ENCODE measurements at regions of chr14 and their contacts with region 1.

Region 1: GRCh38 chr14:64720131-64720576 is 15.9 kb downstream of the PLEKHG3 start:
- H3K4me3 Mint-ChIP-seq: no peak overlapping the region
- H3K27ac Mint-ChIP-seq: no peak overlapping the region
- H3K4me1 Mint-ChIP-seq: peaks cover 85% of the 10 kb centered on the region
- H3K27me3 Mint-ChIP-seq: no peaks in the 10 kb centered on the region

Region 2: DNA sequence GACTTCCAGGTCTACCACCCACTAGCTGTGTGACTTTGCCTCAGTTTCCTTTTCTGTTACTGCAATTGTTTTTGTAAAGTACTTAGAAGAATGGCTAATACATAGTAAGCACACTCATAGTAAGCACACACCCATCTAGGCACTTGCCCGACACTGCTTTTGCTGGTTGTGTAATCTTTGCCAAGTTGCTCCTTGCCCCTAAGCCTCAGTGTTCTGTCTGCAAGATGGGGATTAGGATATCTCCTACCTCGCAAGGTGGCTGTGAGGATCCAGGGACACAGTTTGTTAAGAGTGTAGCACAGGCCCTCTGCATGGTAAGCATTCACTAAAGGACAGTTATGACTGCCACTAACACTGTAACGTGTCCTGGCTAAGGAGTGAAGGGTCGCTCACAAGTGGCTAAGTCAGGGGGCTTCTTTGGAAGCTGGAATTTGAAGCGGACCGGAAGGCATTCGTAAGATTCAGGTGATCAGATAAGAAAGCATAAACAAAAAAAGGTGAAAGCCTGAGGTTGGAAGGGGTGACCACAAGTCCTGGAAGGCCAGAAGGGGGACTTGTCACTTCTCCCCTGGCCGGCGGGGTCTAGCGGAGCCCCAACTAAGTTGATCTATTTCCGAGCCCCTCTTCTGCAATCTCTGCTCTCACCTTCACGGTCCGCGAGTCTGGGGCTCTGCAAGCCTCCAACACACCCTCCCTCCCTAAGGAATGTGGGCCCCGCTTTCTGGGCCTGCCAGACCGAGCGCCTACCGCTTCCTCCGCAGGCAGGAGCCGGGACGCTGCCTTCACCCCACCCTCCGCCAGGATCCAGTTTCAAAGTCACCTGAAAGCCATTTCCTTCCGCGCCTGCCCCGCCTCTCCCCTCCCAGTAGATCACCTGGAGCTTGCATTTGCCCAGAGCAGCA is 17.4 kb before region 1 on chr14:
- intact Hi-C with region 1: no loop called
- H3K4me3 Mint-ChIP-seq: peak overlapping the region; percentile 79
- H3K27ac Mint-ChIP-seq: peak overlapping the region; percentile 79
- H3K4me1 Mint-ChIP-seq: peaks cover 60% of the 10 kb centered on the region
- H3K27me3 Mint-ChIP-seq: peaks cover 21% of the 10 kb centered on the region

Region 3: DNA sequence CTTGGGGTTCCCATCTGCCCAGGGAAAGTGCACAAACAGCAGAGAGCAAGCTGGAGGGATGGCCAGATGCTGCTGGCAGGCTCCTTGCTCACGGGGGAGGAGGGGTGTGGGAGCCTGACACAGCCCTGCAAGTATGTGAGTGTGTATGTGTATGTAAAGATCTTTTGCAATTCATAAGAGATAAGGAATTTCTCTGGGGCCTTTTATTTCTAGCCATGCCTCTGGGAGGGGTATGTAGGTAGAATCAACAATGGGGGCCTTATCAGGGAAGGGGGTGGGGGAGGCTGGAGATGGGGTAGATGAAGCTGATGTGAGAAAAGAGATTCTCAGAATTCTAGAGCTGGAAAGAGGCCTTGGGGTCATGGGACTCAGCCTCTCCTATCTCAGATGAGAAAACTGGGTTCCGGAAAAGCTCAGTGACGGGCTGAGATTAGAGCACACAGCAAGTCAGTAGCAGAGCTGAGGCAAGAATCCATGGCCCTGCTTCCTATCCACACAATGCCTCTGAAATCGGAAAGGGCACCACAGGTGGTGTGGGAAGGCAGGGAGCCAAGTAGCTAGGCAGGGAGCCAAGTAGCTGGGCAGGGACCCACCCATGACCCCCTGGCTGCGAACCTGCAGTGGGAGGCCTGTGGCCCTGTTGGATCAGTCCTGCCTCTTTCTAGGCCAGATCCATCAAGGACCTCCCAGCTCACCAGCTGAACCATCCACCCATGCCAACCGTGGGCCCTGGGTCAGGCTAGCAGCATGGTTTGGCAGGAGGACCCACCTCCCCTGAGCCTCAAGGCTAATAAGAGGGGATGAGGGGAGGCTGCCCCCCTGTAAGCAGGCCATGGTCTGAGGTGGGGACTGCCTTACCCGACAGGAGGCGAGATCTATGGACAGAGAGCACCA is 38.8 kb after region 1 on chr14:
- intact Hi-C with region 1: loop called (anchors 5 kb)
- H3K4me3 Mint-ChIP-seq: no peak overlapping the region
- H3K27ac Mint-ChIP-seq: peak overlapping the region; percentile 6
- H3K4me1 Mint-ChIP-seq: peaks cover 7% of the 10 kb centered on the region
- H3K27me3 Mint-ChIP-seq: peaks cover 59% of the 10 kb centered on the region

Measured in dendritic cell treated with granulocyte-macrophage colony-stimulating factor and Interleukin-4, amounts not matched to agents 40 ng/mL and 50 ng/mL, for 4 days (primary cell).